CD4-positive, alpha-beta memory T cell (primary cell): ENCODE measurements at regions of chr1 and their contacts with region 1.

Region 1: GRCh38 chr1:161292631-161293030 is 17.1 kb downstream of the MPZ start:
- DNase-seq: no peak
- H3K4me3 ChIP-seq: no peak overlapping the region
- H3K4me3 Mint-ChIP-seq: no peak overlapping the region
- H3K27ac ChIP-seq: no peak overlapping the region
- H3K27ac Mint-ChIP-seq: no peak overlapping the region
- H3K4me1 ChIP-seq: no peaks in the 10 kb centered on the region
- H3K4me1 Mint-ChIP-seq: peaks cover 0 to 5% (median under 1%) of the 10 kb centered on the region in 4 donors
- H3K27me3 ChIP-seq: no peaks in the 10 kb centered on the region
- H3K27me3 Mint-ChIP-seq: no peaks in the 10 kb centered on the region

Region 2: GRCh38 chr1:160354388-160354985 is 938.1 kb before region 1 on chr1:
- CTCF ChIA-PET with region 1: no interaction called
- POLR2A ChIA-PET with region 1: no interaction called
- intact Hi-C with region 1: no loop called
- DNase-seq: peak in 2 of 5 donors; percentile 20 to 39
- H3K4me3 ChIP-seq: no peak overlapping the region
- H3K4me3 Mint-ChIP-seq: no peak overlapping the region
- H3K27ac ChIP-seq: no peak overlapping the region
- H3K27ac Mint-ChIP-seq: no peak overlapping the region
- H3K4me1 ChIP-seq: no peaks in the 10 kb centered on the region
- H3K4me1 Mint-ChIP-seq: peaks cover 0 to 3% (median under 1%) of the 10 kb centered on the region in 4 donors
- H3K27me3 ChIP-seq: no peaks in the 10 kb centered on the region
- H3K27me3 Mint-ChIP-seq: no peaks in the 10 kb centered on the region

Region 3: GRCh38 chr1:160590488-160590887 is 702.1 kb before region 1 on chr1:
- CTCF ChIA-PET with region 1: no interaction called
- POLR2A ChIA-PET with region 1: no interaction called
- intact Hi-C with region 1: no loop called
- DNase-seq: no peak
- H3K4me3 ChIP-seq: no peak overlapping the region
- H3K4me3 Mint-ChIP-seq: peak overlapping the region in 1 of 8 donors; percentile 17
- H3K27ac ChIP-seq: no peak overlapping the region
- H3K27ac Mint-ChIP-seq: no peak overlapping the region
- H3K4me1 ChIP-seq: peaks cover 5% of the 10 kb centered on the region
- H3K4me1 Mint-ChIP-seq: peaks cover 5 to 32% (median 15%) of the 10 kb centered on the region in 4 donors
- H3K27me3 ChIP-seq: no peaks in the 10 kb centered on the region
- H3K27me3 Mint-ChIP-seq: no peaks in the 10 kb centered on the region

Region 4: GRCh38 chr1:161177112-161177935 is 115.3 kb before region 1 on chr1 and contains the start of gene B4GALT3:
- CTCF ChIA-PET with region 1: interaction called, 8 read pairs
- POLR2A ChIA-PET with region 1: interaction called, 4 read pairs
- intact Hi-C with region 1: loop called (anchors 1 kb)
- DNase-seq: peak; percentile 89 to 94 (median 90)
- H3K4me3 ChIP-seq: peak within 1 kb of the TSS; percentile 90 to 97
- H3K4me3 Mint-ChIP-seq: peak within 1 kb of the TSS; percentile 98 to 100 (median 100)
- H3K27ac ChIP-seq: peak within 1 kb of the TSS; percentile 85
- H3K27ac Mint-ChIP-seq: peak within 1 kb of the TSS; percentile 95 to 100 (median 99)
- H3K4me1 ChIP-seq: peaks cover 56% of the 10 kb centered on the region
- H3K4me1 Mint-ChIP-seq: peaks cover 45 to 85% (median 68%) of the 10 kb centered on the region in 4 donors
- H3K27me3 ChIP-seq: no peaks in the 10 kb centered on the region
- H3K27me3 Mint-ChIP-seq: no peaks in the 10 kb centered on the region
- total RNA-seq, gene B4GALT3: 64.6 to 71.5 TPM

Region 5: DNA sequence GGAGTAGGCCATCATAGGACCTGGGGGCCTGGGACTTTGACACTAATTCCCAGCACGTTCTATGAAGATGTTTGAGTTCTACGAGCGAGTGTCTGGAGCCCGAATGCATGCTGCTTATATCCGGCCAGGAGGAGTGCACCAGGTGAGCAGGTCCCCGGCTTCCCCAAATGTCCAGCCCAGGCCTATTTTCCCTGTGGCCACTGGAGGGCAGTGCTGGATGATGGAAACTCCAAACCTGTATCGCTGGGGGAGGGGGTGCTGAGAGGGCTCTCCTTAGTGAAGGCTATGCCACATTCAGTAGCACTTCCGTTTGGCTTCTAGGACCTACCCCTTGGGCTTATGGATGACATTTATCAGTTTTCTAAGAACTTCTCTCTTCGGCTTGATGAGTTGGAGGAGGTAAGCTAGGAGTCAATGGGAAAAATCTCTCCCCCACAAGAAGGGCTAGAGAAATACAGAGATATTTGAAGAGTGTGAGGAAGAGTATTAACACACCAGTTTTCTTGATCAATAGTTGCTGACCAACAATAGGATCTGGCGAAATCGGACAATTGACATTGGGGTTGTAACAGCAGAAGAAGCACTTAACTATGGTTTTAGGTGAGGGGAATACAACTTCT is 82.7 kb before region 1 on chr1:
- CTCF ChIA-PET with region 1: interaction called, 10 read pairs
- POLR2A ChIA-PET with region 1: no interaction called
- intact Hi-C with region 1: no loop called
- DNase-seq: peak; percentile 64 to 74 (median 68)
- H3K4me3 ChIP-seq: no peak overlapping the region
- H3K4me3 Mint-ChIP-seq: no peak overlapping the region
- H3K27ac ChIP-seq: no peak overlapping the region
- H3K27ac Mint-ChIP-seq: peak overlapping the region; percentile 57 to 88 (median 68)
- H3K4me1 ChIP-seq: peaks cover 25% of the 10 kb centered on the region
- H3K4me1 Mint-ChIP-seq: peaks cover 20 to 38% (median 27%) of the 10 kb centered on the region in 4 donors
- H3K27me3 ChIP-seq: no peaks in the 10 kb centered on the region
- H3K27me3 Mint-ChIP-seq: no peaks in the 10 kb centered on the region